ENCODE measurements at regions of chr14 and their contacts with region 1.

Region 1: GRCh38 chr14:76484355-76484754 is 108.4 kb downstream of the ESRRB start:
- DNase-seq: no peak
- H3K4me3 ChIP-seq: no peak overlapping the region
- H3K27ac ChIP-seq: no peak overlapping the region
- H3K4me1 ChIP-seq: no peaks in the 10 kb centered on the region
- H3K27me3 ChIP-seq: no peaks in the 10 kb centered on the region
- CTCF ChIP-seq: no peak
- EP300 ChIP-seq: no peak
- POLR2A ChIP-seq: no peak

Region 2: GRCh38 chr14:74964787-74965485 is 1519.4 kb before region 1 on chr14:
- in situ Hi-C with region 1: no loop called
- intact Hi-C with region 1: loop called (anchors 5 kb)
- DNase-seq: no peak
- H3K4me3 ChIP-seq: no peak overlapping the region
- H3K27ac ChIP-seq: no peak overlapping the region
- H3K4me1 ChIP-seq: no peaks in the 10 kb centered on the region
- H3K27me3 ChIP-seq: no peaks in the 10 kb centered on the region
- CTCF ChIP-seq: no peak
- EP300 ChIP-seq: no peak
- POLR2A ChIP-seq: no peak

Region 3: DNA sequence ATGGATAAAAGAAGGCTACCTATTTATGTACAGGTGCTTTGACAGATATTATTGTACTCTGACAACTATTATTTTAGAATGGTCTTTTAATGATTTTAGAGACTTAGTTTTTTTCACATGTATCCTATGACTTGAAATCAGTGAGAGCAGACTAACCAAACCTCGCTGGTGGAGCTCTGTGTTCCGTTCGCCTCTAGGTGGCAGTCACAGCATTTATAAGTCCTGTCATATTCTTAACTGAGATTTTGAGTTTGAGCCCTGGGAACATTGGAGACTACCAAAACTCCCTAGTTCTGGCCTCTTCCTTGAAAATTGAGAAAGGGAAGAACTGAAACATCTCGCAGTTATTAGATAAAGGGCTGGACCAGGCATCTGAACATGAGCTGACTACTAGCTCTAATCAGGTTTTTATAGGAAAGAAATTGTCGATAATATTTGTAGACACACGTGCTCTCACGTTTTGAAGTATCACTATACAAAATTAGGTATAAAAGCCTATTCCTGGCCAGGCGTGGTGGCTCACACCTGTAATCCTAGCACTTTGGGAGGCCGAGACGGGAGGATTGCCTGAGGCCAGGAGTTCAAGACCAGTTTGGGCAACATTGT is 775.0 kb before region 1 on chr14:
- in situ Hi-C with region 1: no loop called
- intact Hi-C with region 1: no loop called
- DNase-seq: peak; percentile 70
- H3K4me3 ChIP-seq: no peak overlapping the region
- H3K27ac ChIP-seq: no peak overlapping the region
- H3K4me1 ChIP-seq: peaks cover 3 to 7% (median 4%) of the 10 kb centered on the region in 4 donors
- H3K27me3 ChIP-seq: no peaks in the 10 kb centered on the region
- CTCF ChIP-seq: peak; percentile 72 to 74 (median 74)
- EP300 ChIP-seq: no peak
- POLR2A ChIP-seq: no peak

Measured in transverse colon (tissue), 4 donors.